ENCODE measurements at regions of chr15 and their contacts with region 1.

Region 1: DNA sequence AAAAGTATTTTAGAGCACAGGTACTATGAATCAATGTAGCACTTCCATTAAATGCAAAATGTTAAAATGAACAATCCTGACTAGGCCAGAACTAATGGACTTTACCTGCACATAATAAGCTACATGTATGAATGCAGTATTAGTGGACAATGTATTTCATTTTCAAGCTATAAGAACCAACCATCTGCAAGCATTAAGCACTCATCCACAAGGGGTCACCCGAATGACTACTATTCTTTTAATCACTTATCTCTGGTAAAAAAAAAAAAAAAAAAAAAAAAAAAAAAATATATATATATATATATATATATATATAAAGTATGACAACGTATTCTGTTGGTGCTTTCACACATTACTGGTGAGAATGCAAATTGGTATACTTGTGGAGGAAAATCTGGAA is 7.2 kb downstream of the HERC1 start:
- DNase-seq: no peak
- ATAC-seq: no peak
- H3K4me3 ChIP-seq: no peak overlapping the region
- H3K27ac ChIP-seq: no peak overlapping the region
- H3K4me1 ChIP-seq: peaks cover 4% of the 10 kb centered on the region
- H3K27me3 ChIP-seq: no peaks in the 10 kb centered on the region

Region 2: GRCh38 chr15:63763476-63764123 is 62.9 kb before region 1 on chr15:
- intact Hi-C with region 1: loop called in 1 of 4 experiments (anchors 10 kb)
- DNase-seq: no peak
- ATAC-seq: no peak
- H3K4me3 ChIP-seq: no peak overlapping the region
- H3K27ac ChIP-seq: no peak overlapping the region
- H3K4me1 ChIP-seq: peaks cover 9% of the 10 kb centered on the region
- H3K27me3 ChIP-seq: no peaks in the 10 kb centered on the region

Region 3: GRCh38 chr15:63891079-63891767 is 64.7 kb after region 1 on chr15:
- intact Hi-C with region 1: loop called in 1 of 4 experiments (anchors 10 kb)
- DNase-seq: peak; percentile 78 to 92 (median 90)
- ATAC-seq: peak; percentile 51 to 70
- H3K4me3 ChIP-seq: no peak overlapping the region
- H3K27ac ChIP-seq: no peak overlapping the region
- H3K4me1 ChIP-seq: no peaks in the 10 kb centered on the region
- H3K27me3 ChIP-seq: no peaks in the 10 kb centered on the region

Measured in right cardiac atrium (tissue), 5 donors.